Right cardiac atrium (tissue), 5 donors: ENCODE measurements at regions of chr2 and their contacts with region 1.

Region 1: GRCh38 chr2:85797921-85798320 is 44.1 kb downstream of the ATOH8 start:
- DNase-seq: no peak
- ATAC-seq: peak; percentile 13 to 43
- H3K4me3 ChIP-seq: no peak overlapping the region
- H3K27ac ChIP-seq: no peak overlapping the region
- H3K4me1 ChIP-seq: peaks cover 33% of the 10 kb centered on the region
- H3K27me3 ChIP-seq: no peaks in the 10 kb centered on the region

Region 2: DNA sequence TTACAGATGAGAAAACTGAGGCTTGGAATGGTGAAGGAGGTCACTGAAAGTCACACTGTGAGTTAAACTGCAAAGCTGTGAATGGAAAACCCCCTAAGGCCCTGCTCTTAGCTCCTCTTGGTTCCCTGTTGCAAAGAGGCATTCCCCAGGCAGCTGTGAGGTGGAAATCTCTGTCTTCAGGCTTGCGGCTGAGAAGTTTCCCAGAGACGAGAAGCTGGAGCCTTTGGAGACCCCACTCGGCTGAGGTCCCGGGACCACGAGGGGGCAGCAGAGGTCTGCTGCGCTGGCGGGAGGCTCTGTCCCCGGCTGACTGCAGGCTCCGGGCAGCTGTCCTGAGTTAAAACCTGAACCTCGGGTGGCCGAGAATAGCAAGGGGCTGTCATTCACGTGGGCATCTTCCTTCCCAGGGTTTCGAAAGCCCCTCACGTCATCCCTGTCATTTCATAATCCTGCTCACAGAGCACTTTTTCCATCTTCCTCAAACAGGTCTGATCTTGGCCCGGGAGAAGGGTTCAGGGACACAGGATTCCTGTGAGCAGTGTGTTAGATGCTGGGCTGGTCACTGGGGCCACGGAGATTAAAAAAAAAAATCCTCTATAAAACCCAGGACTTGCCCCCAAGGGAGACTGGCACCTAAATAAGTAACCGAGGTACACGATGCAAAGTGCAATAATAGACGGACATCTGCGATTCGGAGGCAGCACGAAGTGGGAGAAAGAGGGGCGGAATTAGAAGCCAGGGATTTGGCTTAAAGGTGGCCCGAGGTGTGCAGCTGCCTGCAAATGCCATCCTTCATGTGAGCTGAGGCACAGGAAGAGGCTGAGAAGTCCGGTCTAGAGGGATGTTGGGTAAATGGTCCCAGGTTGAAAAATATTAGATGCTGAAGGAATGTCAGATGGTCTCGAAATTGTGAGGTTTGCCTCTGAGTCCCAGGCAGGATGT is 68.8 kb before region 1 on chr2:
- intact Hi-C with region 1: loop called in 1 of 4 experiments (anchors 5 kb)
- DNase-seq: peak; percentile 91 to 96 (median 96)
- ATAC-seq: peak; percentile 94 to 96
- H3K4me3 ChIP-seq: no peak overlapping the region
- H3K27ac ChIP-seq: no peak overlapping the region
- H3K4me1 ChIP-seq: no peaks in the 10 kb centered on the region
- H3K27me3 ChIP-seq: no peaks in the 10 kb centered on the region

Region 3: GRCh38 chr2:85741833-85742455 is 56.0 kb before region 1 on chr2:
- intact Hi-C with region 1: loop called in 1 of 4 experiments (anchors 10 kb)
- DNase-seq: peak; percentile 85 to 94 (median 92)
- ATAC-seq: peak; percentile 71 to 82
- H3K4me3 ChIP-seq: no peak overlapping the region
- H3K27ac ChIP-seq: peak overlapping the region; percentile 97
- H3K4me1 ChIP-seq: peaks cover 42% of the 10 kb centered on the region
- H3K27me3 ChIP-seq: no peaks in the 10 kb centered on the region

Region 4: DNA sequence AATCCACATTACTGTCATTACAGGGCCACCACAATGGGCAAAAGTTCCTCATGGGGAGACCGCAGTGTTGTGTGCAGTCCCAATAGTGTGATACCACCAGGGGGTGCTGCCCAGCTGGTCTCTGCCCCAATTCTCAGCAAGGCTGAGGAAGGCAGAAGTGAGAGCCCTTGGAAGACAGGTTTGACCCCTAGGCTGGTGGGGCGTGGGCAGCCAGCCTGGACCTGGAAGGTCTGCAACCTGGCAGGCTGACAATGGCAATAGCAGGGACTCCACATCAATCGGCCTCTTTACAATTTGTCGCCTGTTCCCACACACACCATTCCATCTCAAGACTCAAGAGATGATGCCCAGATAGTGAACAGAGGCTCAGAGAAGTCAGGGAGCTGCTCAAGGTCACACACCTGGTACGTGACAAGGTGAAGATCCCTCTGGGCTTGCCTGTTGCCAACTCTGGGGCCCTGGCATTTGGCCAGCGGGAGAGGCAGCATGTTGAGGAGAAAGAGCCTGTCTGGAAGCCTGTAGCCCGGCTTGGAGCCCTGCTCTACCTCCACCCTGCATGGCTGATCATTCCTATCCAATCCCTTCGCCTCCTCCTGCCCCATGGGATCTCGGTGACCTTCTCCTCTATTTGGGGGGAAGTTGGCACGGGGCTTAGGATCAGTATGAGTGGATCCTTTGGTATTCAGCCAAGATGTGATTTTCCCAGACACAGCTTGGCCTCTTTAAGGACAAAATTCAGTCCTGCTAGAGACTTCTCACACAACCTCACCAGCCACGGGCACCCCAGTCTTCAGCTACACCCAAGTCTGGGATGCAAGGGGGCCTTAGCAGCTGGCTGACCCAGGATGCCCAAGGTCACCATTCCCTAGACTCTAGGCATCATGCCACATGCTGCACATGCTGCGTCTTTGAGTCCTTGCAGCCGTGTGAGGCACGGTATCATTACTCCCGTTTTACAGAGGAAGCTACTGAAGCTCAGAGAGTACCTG is 47.0 kb before region 1 on chr2:
- intact Hi-C with region 1: loop called in 2 of 4 experiments (anchors 5 to 10 kb)
- DNase-seq: peak; percentile 76 to 90 (median 89)
- ATAC-seq: peak; percentile 35 to 62
- H3K4me3 ChIP-seq: no peak overlapping the region
- H3K27ac ChIP-seq: peak overlapping the region; percentile 75
- H3K4me1 ChIP-seq: peaks cover 28% of the 10 kb centered on the region
- H3K27me3 ChIP-seq: no peaks in the 10 kb centered on the region

Region 5: GRCh38 chr2:85765081-85765731 is 32.7 kb before region 1 on chr2:
- intact Hi-C with region 1: no loop called
- DNase-seq: peak; percentile 46 to 86 (median 84)
- ATAC-seq: peak; percentile 36 to 42
- H3K4me3 ChIP-seq: no peak overlapping the region
- H3K27ac ChIP-seq: peak overlapping the region; percentile 91
- H3K4me1 ChIP-seq: peaks cover 68% of the 10 kb centered on the region
- H3K27me3 ChIP-seq: no peaks in the 10 kb centered on the region